CD8-positive, alpha-beta T cell (primary cell): ENCODE measurements at regions of chr16 and their contacts with region 1.

Region 1: DNA sequence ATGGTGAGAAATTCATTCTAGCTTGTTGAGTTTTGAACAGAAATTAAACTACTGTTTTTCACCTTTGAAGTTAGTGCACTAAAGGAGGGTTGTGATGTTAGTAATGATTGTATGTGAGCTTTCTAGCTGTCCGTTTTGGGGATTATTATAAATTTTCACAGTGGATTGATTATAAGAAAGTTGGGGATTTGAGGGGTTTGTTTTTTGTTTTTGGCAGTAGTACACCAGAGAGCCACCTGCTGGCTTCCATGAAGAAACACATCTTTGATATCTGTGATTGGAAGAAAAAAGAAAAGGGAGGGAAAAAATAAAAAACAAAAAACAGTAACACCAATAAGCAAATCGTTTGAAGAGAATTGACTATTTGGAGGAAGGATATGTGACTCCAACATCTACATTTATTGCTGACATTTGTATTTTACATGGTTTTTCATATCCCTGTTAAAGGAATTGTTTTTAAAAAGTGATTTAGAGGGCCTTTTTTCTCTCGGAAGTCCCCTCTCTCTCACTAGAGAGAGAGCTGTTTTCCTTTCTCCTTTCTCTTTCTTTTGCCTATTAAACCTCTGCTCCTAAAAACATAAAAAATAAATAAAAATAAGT is 1469.5 kb upstream of the GOT2 start:
- DNase-seq: no peak
- ATAC-seq: no peak
- H3K4me3 ChIP-seq: no peak overlapping the region
- H3K4me3 Mint-ChIP-seq: no peak overlapping the region
- H3K27ac ChIP-seq: no peak overlapping the region
- H3K27ac Mint-ChIP-seq: no peak overlapping the region
- H3K4me1 ChIP-seq: no peaks in the 10 kb centered on the region
- H3K4me1 Mint-ChIP-seq: no peaks in the 10 kb centered on the region
- H3K27me3 ChIP-seq: no peaks in the 10 kb centered on the region
- H3K27me3 Mint-ChIP-seq: no peaks in the 10 kb centered on the region
- CTCF ChIP-seq: no peak

Region 2: GRCh38 chr16:58814348-58814801 is 1389.2 kb before region 1 on chr16:
- CTCF ChIA-PET with region 1: no interaction called
- POLR2A ChIA-PET with region 1: no interaction called
- intact Hi-C with region 1: loop called in 1 of 2 experiments (anchors 5 kb)
- DNase-seq: peak in 6 of 9 experiments; percentile 1 to 53 (median 31)
- ATAC-seq: no peak
- H3K4me3 ChIP-seq: no peak overlapping the region
- H3K4me3 Mint-ChIP-seq: peak overlapping the region; percentile 70
- H3K27ac ChIP-seq: no peak overlapping the region
- H3K27ac Mint-ChIP-seq: no peak overlapping the region
- H3K4me1 ChIP-seq: no peaks in the 10 kb centered on the region
- H3K4me1 Mint-ChIP-seq: peaks cover 4% of the 10 kb centered on the region
- H3K27me3 ChIP-seq: no peaks in the 10 kb centered on the region
- H3K27me3 Mint-ChIP-seq: peaks cover 6% of the 10 kb centered on the region
- CTCF ChIP-seq: peak; percentile 84

Region 3: DNA sequence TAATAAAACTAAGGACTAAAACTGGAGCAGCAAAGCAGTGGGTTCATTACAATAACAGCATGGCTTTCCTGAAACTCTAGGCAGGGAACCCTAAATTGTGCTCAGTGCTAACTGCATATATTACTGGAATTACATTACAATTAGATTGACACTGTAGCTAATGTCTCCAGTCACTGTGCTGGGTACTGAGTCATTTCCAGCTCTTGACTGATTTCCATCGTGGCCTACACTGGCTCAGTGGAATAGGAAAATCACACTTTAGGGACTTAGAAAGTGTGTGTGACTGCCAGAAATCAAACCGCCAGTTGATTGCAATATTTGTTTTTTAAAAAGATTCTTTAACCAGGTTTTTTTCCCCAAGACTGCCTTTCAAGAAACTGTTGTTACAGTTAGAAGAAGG is 22.1 kb before region 1 on chr16:
- CTCF ChIA-PET with region 1: no interaction called
- POLR2A ChIA-PET with region 1: no interaction called
- intact Hi-C with region 1: no loop called
- DNase-seq: no peak
- ATAC-seq: no peak
- H3K4me3 ChIP-seq: no peak overlapping the region
- H3K4me3 Mint-ChIP-seq: no peak overlapping the region
- H3K27ac ChIP-seq: no peak overlapping the region
- H3K27ac Mint-ChIP-seq: no peak overlapping the region
- H3K4me1 ChIP-seq: no peaks in the 10 kb centered on the region
- H3K4me1 Mint-ChIP-seq: no peaks in the 10 kb centered on the region
- H3K27me3 ChIP-seq: no peaks in the 10 kb centered on the region
- H3K27me3 Mint-ChIP-seq: no peaks in the 10 kb centered on the region
- CTCF ChIP-seq: no peak

Region 4: GRCh38 chr16:60259956-60260355 is 56.3 kb after region 1 on chr16:
- CTCF ChIA-PET with region 1: no interaction called
- POLR2A ChIA-PET with region 1: no interaction called
- intact Hi-C with region 1: loop called in 1 of 2 experiments (anchors 10 kb)
- DNase-seq: no peak
- ATAC-seq: no peak
- H3K4me3 ChIP-seq: no peak overlapping the region
- H3K4me3 Mint-ChIP-seq: no peak overlapping the region
- H3K27ac ChIP-seq: no peak overlapping the region
- H3K27ac Mint-ChIP-seq: no peak overlapping the region
- H3K4me1 ChIP-seq: no peaks in the 10 kb centered on the region
- H3K4me1 Mint-ChIP-seq: no peaks in the 10 kb centered on the region
- H3K27me3 ChIP-seq: no peaks in the 10 kb centered on the region
- H3K27me3 Mint-ChIP-seq: no peaks in the 10 kb centered on the region
- CTCF ChIP-seq: no peak